Activated T-helper 2 cell treated with anti-CD3 and anti-CD28 coated beads, Interferon-gamma antibody, Interleukin-2, Interleukin-4, amounts not matched to agents 10 μg/mL and 5 μg/mL and 100 μg/mL, durations not matched to agents 14 hours and 24 hours and 36 hours (primary cell): ENCODE measurements at regions of chr5 and their contacts with region 1.

Region 1: DNA sequence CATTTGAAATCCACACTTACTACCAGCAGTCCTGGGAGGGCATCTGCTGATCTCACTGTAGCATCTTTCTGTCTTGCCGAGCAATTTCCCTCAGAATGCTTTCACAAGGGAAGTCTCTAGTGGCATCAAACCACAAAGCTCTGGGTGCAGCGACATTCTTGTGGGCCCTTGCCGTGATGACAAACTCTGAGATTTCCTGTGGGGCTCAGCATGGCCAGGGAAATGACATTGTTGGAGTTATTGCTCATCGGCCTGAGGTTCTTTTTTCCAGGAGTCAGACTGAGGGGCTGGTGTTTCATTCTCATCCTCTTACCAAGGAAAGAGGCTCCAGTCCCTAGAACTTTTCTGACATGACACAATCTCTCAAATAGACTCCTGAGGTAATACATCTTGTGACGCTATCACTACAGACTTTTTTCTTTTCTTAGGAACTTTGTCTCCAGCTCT is 51.4 kb downstream of the PFDN1 start:
- DNase-seq: peak; percentile 59
- H3K4me3 Mint-ChIP-seq: no peak overlapping the region
- H3K27ac Mint-ChIP-seq: peak overlapping the region; percentile 80
- H3K4me1 Mint-ChIP-seq: peaks cover 34% of the 10 kb centered on the region
- H3K27me3 Mint-ChIP-seq: no peaks in the 10 kb centered on the region

Region 2: GRCh38 chr5:140265845-140266244 is 14.3 kb after region 1 on chr5:
- intact Hi-C with region 1: loop called (anchors 1 kb)
- DNase-seq: no peak
- H3K4me3 Mint-ChIP-seq: no peak overlapping the region
- H3K27ac Mint-ChIP-seq: peak overlapping the region; percentile 47
- H3K4me1 Mint-ChIP-seq: peaks cover 42% of the 10 kb centered on the region
- H3K27me3 Mint-ChIP-seq: no peaks in the 10 kb centered on the region

Region 3: DNA sequence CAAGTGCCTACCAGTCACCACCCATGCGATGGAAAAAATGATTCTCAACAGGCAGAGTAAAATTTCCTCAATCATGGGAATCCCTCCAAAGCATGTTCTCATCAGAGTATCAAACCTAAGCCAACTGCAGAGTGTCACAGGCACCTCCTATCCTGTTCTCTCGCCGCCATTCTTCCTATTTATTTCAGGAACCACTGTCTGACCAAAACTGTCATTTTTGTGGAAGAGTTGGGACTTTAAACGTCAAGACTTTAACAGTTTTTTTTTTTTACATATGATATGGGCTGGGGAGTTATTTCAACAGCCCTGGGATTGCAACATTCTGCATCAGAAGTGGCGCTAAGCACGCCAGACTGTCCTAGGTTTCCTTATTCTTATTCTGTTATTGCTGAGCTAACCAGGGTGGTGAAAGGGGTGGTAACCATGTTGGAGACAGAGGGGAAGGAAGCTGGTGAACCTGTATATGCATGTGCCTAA is 21.9 kb after region 1 on chr5:
- intact Hi-C with region 1: loop called (anchors 2 kb)
- DNase-seq: no peak
- H3K4me3 Mint-ChIP-seq: no peak overlapping the region
- H3K27ac Mint-ChIP-seq: no peak overlapping the region
- H3K4me1 Mint-ChIP-seq: peaks cover 19% of the 10 kb centered on the region
- H3K27me3 Mint-ChIP-seq: no peaks in the 10 kb centered on the region

Region 4: GRCh38 chr5:140302786-140303639 is 51.5 kb after region 1 on chr5 and contains the start of gene PFDN1:
- intact Hi-C with region 1: loop called (anchors 2 kb)
- DNase-seq: peak; percentile 91
- H3K4me3 Mint-ChIP-seq: peak within 1 kb of the TSS; percentile 100
- H3K27ac Mint-ChIP-seq: peak within 1 kb of the TSS; percentile 98
- H3K4me1 Mint-ChIP-seq: peaks cover 24% of the 10 kb centered on the region
- H3K27me3 Mint-ChIP-seq: peaks cover 11% of the 10 kb centered on the region
- total RNA-seq, gene PFDN1: 60.4 and 61.0 TPM in 2 replicates

Region 5: GRCh38 chr5:140345919-140346347 is 94.4 kb after region 1 on chr5:
- intact Hi-C with region 1: loop called (anchors 1 kb)
- DNase-seq: no peak
- H3K4me3 Mint-ChIP-seq: peak overlapping the region; percentile 87
- H3K27ac Mint-ChIP-seq: no peak overlapping the region
- H3K4me1 Mint-ChIP-seq: peaks cover 42% of the 10 kb centered on the region
- H3K27me3 Mint-ChIP-seq: peaks cover 8% of the 10 kb centered on the region